SK-N-SH (cell line): ENCODE measurements at regions of chr1 and their contacts with region 1.

Region 1: GRCh38 chr1:91997607-91998195 is 32.1 kb upstream of the EPHX4 start:
- DNase-seq: peak; percentile 43
- H3K4me3 ChIP-seq: no peak overlapping the region
- H3K27ac ChIP-seq: no peak overlapping the region
- H3K4me1 ChIP-seq: no peaks in the 10 kb centered on the region
- H3K27me3 ChIP-seq: 0 out of 2 replicates have a peak, but pooled peaks cover 4% of the 10 kb centered on the region
- CTCF ChIP-seq: peak; percentile 78
- EP300 ChIP-seq: no peak
- RAD21 ChIP-seq: peak; percentile 88

Region 2: DNA sequence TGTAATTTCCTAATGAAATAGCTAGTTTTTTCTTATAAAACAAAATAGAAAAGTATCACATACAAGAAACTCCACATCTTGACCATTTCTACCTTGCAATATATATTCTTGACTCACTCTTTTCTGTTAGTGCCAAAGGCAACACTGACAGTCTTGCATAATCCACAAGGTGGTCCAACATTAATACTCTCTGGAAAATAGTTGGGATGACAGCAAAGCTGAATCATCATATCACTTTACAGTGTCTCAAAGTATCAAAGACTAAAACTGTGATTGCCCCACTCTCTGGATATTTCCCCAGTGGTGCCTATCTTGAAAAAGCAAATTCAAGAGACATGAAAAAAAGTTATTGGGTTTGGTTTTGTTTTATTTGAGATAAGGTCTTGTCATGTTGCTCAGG is 97.2 kb before region 1 on chr1:
- CTCF ChIA-PET with region 1: no interaction called
- POLR2A ChIA-PET with region 1: no interaction called
- DNase-seq: no peak
- H3K4me3 ChIP-seq: no peak overlapping the region
- H3K27ac ChIP-seq: peak overlapping the region in 1 of 2 experiments; percentile 3; a peak in 1 of 4 replicates
- H3K4me1 ChIP-seq: no peaks in the 10 kb centered on the region
- H3K27me3 ChIP-seq: peaks cover 5% of the 10 kb centered on the region; the same call in 1 of the 2 replicates
- CTCF ChIP-seq: no peak
- EP300 ChIP-seq: no peak
- RAD21 ChIP-seq: no peak

Region 3: DNA sequence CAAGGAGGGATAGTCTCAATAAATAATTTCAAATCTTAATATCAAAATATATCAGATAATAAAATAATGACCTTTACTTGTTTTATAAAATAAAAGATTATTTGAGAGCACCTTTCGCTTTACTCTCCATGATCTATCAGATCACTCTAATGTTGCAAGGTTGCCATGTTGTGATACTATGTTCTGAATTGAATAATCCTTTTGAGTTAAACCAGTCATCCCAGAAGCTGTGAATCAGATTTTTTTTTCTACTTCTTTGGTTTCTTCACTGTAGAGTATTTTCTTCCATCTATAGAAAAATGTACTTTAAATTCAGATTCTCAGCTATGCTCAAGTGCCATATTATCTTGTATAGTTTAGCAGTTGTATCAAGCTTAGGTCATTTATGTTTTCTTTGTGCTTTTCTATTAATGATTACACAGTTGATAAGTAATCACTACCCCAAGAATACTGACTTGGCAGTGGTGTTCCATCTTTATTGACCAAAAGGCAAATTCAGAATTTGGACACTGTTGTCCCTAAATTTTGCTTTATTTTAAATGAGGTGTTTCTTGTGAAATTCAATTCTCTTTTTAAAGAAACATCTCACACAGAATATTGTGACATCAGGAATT is 15.6 kb before region 1 on chr1:
- CTCF ChIA-PET with region 1: interaction called, 13 read pairs
- POLR2A ChIA-PET with region 1: interaction called, 3 read pairs
- DNase-seq: no peak
- H3K4me3 ChIP-seq: no peak overlapping the region
- H3K27ac ChIP-seq: no peak overlapping the region
- H3K4me1 ChIP-seq: no peaks in the 10 kb centered on the region
- H3K27me3 ChIP-seq: peaks cover 6% of the 10 kb centered on the region; the same call in 1 of the 2 replicates
- CTCF ChIP-seq: no peak
- EP300 ChIP-seq: no peak
- RAD21 ChIP-seq: no peak

Region 4: DNA sequence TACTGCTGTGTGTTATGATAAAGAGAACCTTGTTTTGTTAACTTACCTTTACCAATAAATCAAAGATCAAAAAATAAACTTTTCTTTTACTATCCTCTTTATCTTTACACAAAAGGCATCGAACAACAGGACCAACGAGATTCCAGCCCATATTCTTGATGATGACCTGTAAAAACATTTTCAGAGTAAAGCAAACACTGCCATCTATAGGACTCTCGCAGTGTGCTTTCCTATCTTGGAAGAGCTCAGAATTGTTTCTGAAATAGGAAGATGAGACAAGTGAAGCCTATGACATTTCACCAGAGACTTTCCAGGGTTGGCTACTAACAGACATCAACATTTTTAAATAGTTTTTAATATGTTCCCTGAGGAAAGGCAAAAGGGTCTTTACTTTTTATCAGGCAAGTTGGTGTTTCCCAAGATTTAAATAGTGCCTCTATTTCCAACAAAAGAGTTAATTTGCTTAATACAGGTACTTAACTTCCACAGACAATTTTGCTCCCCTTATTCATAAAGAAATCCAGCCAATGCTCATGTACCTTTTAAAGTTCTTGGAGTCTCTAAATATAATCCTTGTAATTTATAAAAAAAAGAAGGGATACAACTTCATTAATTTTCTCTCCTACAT is 293.8 kb after region 1 on chr1:
- CTCF ChIA-PET with region 1: interaction called, 127 read pairs
- POLR2A ChIA-PET with region 1: no interaction called
- DNase-seq: peak; percentile 49
- H3K4me3 ChIP-seq: no peak overlapping the region
- H3K27ac ChIP-seq: no peak overlapping the region
- H3K4me1 ChIP-seq: no peaks in the 10 kb centered on the region
- H3K27me3 ChIP-seq: no peaks in the 10 kb centered on the region
- CTCF ChIP-seq: peak; percentile 88
- EP300 ChIP-seq: no peak
- RAD21 ChIP-seq: peak; percentile 86

Region 5: DNA sequence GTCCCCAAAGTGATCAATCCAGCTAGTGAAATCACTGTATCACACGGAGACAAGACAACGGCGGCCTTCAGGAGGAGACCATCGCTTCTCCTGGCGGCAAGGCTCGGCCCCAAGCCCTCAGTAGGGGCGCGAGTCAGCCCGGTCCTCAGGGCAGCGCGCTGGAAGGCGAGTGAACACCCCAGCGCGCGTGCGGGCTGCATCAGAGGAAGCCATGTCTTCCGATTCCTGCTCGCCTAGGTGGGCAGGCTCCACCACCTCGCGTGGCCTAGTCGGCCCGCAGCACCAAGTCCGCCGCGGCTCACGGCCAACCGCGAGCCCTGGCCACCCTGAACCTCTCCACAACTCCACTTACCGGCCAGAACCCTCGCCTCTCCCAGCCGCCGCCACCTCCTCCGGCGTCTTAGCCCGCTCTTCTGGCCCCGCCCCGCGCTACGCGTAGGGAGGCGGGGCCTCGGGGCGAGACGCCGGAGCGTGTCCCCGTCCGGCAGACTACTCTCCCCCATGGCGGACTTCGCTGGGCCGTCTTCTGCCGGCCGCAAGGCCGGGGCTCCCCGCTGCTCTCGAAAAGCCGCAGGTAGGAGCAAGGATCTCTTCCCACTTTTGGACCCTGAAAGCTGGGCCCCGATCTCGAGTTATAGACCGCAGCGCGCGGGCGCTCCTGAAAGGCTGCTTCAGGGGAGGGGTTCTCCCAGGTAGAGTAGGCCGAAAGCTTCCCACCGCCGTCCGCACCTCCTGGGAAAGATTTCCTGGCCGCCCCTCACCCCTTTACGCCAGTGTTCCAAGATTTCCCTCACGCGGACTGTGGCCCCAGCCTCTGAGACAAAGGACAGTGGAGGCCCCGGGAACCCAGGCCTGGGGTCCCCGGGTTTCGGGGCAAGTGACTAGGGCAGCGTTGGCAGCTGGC is 301.1 kb after region 1 on chr1 and contains the starts of genes GLMN and RPAP2:
- CTCF ChIA-PET with region 1: interaction called, 15 read pairs
- POLR2A ChIA-PET with region 1: no interaction called
- DNase-seq: peak; percentile 92
- H3K4me3 ChIP-seq: peak within 1 kb of the TSS; percentile 92 to 94
- H3K27ac ChIP-seq: peak within 1 kb of the TSS; percentile 88 to 97
- H3K4me1 ChIP-seq: peaks cover 4 to 8% of the 10 kb centered on the region in 2 experiments; a peak in 2 of 4 replicates
- H3K27me3 ChIP-seq: no peaks in the 10 kb centered on the region
- CTCF ChIP-seq: 0 out of 2 replicates have a peak, but pooled peaks have one; percentile 19
- EP300 ChIP-seq: no peak
- RAD21 ChIP-seq: no peak
- polyA plus RNA-seq, gene GLMN: 2.3 and 3.6 TPM in 2 replicates
- polyA plus RNA-seq, gene RPAP2: 3.4 and 5.2 TPM in 2 replicates

Region 6: GRCh38 chr1:92623187-92623778 is 625.6 kb after region 1 on chr1:
- CTCF ChIA-PET with region 1: interaction called, 13 read pairs
- POLR2A ChIA-PET with region 1: no interaction called
- DNase-seq: peak; percentile 27
- H3K4me3 ChIP-seq: no peak overlapping the region
- H3K27ac ChIP-seq: no peak overlapping the region
- H3K4me1 ChIP-seq: no peaks in the 10 kb centered on the region; a peak in 1 of 4 replicates
- H3K27me3 ChIP-seq: no peaks in the 10 kb centered on the region
- CTCF ChIP-seq: peak; percentile 65
- EP300 ChIP-seq: no peak
- RAD21 ChIP-seq: peak; percentile 69